Activated B cell treated with CpG ODN at 0.5 μM for 24 hours (primary cell): ENCODE measurements at regions of chr19 and their contacts with region 1.

Region 1: GRCh38 chr19:38402967-38403861 is at the start of gene FAM98C:
- DNase-seq: peak; percentile 99
- ATAC-seq: peak; percentile 97
- H3K4me3 Mint-ChIP-seq: peak within 1 kb of the TSS; percentile 91
- H3K27ac Mint-ChIP-seq: peak within 1 kb of the TSS; percentile 90
- H3K4me1 Mint-ChIP-seq: peaks cover 22% of the 10 kb centered on the region
- H3K27me3 Mint-ChIP-seq: peaks cover 6% of the 10 kb centered on the region
- CTCF ChIP-seq: peak; percentile 98
- total RNA-seq, gene FAM98C: 38.3 and 40.0 TPM in 2 replicates

Region 2: GRCh38 chr19:38022791-38023670 is 380.2 kb before region 1 on chr19:
- CTCF ChIA-PET with region 1: no interaction called
- POLR2A ChIA-PET with region 1: no interaction called
- intact Hi-C with region 1: no loop called
- DNase-seq: no peak
- ATAC-seq: no peak
- H3K4me3 Mint-ChIP-seq: peak overlapping the region; percentile 21
- H3K27ac Mint-ChIP-seq: peak overlapping the region; percentile 79
- H3K4me1 Mint-ChIP-seq: peaks cover 93% of the 10 kb centered on the region
- H3K27me3 Mint-ChIP-seq: no peaks in the 10 kb centered on the region
- CTCF ChIP-seq: no peak

Region 3: GRCh38 chr19:38335949-38336637 is 67.1 kb before region 1 on chr19:
- CTCF ChIA-PET with region 1: no interaction called
- POLR2A ChIA-PET with region 1: interaction called, 13 read pairs
- intact Hi-C with region 1: loop called (anchors 1 kb)
- DNase-seq: peak; percentile 91
- ATAC-seq: peak; percentile 64
- H3K4me3 Mint-ChIP-seq: peak overlapping the region; percentile 91
- H3K27ac Mint-ChIP-seq: peak overlapping the region; percentile 97
- H3K4me1 Mint-ChIP-seq: peaks cover 8% of the 10 kb centered on the region
- H3K27me3 Mint-ChIP-seq: no peaks in the 10 kb centered on the region
- CTCF ChIP-seq: no peak

Region 4: DNA sequence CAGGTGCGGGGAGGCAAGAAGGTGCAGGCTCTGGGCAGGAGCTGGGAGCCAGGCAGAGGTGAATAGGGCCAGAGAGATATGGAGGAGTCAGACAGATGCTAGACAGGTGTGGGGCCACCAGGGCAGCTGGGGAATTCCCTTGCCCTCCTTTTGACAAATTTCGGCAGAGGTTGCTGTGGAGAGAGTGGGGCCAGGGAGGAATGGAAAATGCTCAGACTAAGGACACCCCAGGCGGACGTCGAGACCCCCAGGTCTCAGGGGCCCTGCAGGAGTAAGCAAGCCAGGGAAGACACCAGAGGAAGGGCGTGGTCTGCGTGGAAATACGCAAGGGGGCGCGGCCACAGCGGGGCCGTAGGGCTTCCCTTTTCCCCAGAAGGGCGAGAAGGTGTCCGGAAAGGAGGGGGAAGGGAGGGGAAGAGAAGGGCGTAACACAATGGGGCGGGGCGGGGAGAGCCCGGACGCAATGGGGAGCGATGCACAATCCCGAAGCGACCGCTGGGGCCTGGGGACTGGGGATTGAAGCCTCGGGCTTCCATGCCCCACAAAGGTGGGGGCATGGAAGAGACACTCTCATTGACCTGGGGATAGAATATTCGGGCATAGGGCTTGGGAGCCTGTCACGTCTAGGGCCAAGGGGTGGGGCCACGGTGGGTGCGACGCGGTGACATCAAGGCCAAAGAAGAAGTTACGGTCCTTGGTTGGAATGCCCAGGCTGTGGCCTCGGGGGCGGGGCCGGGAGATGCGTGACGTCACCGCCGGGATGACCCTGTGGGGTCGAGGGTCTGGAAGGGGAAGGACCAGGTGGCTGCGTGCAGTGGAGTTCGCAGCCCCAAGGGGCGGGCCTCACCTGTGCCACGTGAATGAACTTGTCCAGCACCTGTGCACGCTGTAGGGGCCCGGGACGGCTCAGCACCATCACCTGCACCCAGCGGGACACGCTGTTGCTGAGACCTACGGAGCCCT is 14.6 kb after region 1 on chr19:
- CTCF ChIA-PET with region 1: interaction called, 5 read pairs
- POLR2A ChIA-PET with region 1: interaction called, 5 read pairs
- intact Hi-C with region 1: loop called (anchors 1 kb)
- DNase-seq: peak; percentile 57
- ATAC-seq: peak; percentile 88
- H3K4me3 Mint-ChIP-seq: peak overlapping the region; percentile 84
- H3K27ac Mint-ChIP-seq: peak overlapping the region; percentile 78
- H3K4me1 Mint-ChIP-seq: peaks cover 26% of the 10 kb centered on the region
- H3K27me3 Mint-ChIP-seq: no peaks in the 10 kb centered on the region
- CTCF ChIP-seq: no peak

Region 5: DNA sequence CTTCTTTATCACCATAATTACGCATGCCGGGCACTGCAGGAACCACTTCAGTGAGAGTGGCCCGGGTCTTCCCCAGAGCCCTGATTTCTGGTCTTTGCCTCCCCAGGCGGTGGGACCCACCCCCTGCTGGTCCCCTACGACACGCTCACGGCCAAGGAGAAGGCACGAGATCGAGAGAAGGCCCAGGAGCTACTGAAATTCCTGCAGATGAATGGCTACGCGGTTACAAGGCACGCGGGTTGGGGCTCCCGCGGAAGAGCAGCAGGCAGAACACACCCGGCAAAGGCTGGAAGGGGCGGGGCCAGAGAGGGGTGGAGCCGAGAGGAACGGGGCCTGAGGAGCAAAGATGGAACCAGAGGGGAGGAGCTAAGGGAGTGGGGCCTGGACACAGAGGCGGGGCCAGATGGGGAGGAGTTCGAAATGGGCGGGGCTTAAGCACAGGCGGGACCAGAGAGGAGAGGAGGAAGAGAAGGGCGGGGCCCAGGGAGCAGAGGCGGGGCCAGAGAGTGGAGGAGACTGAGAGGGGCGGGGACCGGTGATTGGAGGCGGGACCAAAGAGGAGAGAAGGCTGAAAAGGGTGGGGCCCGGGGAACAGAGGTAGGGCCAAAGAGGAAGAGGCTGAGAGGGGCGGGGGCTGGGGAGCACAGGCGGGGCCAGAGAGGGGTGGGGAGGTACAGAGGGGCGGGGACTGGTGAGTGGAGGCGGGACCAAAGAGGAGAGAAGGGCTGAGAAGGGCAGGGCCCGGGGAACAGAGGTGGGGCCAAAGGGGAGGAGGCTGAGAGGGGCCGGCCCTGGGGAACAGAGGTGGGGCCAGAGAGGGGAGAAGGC is 103.7 kb after region 1 on chr19:
- CTCF ChIA-PET with region 1: interaction called, 4 read pairs
- POLR2A ChIA-PET with region 1: no interaction called
- intact Hi-C with region 1: loop called (anchors 2 kb)
- DNase-seq: peak; percentile 78
- ATAC-seq: peak; percentile 95
- H3K4me3 Mint-ChIP-seq: peak overlapping the region; percentile 28
- H3K27ac Mint-ChIP-seq: no peak overlapping the region
- H3K4me1 Mint-ChIP-seq: peaks cover 6% of the 10 kb centered on the region
- H3K27me3 Mint-ChIP-seq: peaks cover 19% of the 10 kb centered on the region
- CTCF ChIP-seq: no peak

Region 6: DNA sequence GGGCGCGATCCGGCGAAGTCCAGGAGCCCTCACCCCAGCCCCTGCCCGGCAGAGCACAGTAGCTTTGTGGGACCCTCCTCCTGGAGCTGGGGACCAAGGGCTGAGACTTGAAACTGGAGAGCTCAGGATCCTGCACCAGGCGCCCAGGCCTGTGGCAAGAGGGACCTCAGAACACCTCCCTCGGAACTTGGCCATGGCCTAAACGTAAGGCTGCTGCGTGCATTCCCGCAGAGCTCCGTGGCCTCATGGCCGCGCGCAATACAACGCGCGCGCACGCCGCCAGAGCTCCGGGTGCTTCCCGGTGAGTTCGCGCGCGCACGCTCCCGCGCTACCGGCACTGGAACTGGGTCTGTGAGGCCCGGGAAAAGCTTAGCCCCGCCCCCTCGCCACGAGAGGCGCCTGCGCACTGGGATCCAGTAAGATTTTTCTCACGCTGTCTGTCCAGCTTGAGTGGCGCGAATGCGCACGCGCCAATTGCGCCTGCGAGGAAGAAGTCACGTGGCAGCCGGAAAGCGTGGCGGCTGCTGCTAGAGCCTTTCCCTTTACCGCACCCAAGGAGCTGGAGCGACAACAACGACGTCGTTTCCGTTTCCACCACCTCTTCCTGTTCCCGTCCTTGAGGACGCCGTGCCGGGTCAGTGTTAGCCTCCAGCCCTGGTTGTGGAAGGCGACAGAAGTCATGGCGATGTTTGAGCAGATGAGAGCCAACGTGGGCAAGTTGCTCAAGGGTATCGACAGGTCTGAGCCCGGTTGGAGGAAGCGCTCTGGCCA is 215.6 kb after region 1 on chr19 and contains the start of gene EIF3K:
- CTCF ChIA-PET with region 1: interaction called, 16 read pairs
- POLR2A ChIA-PET with region 1: interaction called, 31 read pairs
- intact Hi-C with region 1: loop called (anchors 1 kb)
- DNase-seq: peak; percentile 97
- ATAC-seq: peak; percentile 28
- H3K4me3 Mint-ChIP-seq: peak within 1 kb of the TSS; percentile 100
- H3K27ac Mint-ChIP-seq: peak within 1 kb of the TSS; percentile 97
- H3K4me1 Mint-ChIP-seq: peaks cover 53% of the 10 kb centered on the region
- H3K27me3 Mint-ChIP-seq: no peaks in the 10 kb centered on the region
- CTCF ChIP-seq: no peak
- total RNA-seq, gene EIF3K: 344 and 385 TPM in 2 replicates

Region 7: DNA sequence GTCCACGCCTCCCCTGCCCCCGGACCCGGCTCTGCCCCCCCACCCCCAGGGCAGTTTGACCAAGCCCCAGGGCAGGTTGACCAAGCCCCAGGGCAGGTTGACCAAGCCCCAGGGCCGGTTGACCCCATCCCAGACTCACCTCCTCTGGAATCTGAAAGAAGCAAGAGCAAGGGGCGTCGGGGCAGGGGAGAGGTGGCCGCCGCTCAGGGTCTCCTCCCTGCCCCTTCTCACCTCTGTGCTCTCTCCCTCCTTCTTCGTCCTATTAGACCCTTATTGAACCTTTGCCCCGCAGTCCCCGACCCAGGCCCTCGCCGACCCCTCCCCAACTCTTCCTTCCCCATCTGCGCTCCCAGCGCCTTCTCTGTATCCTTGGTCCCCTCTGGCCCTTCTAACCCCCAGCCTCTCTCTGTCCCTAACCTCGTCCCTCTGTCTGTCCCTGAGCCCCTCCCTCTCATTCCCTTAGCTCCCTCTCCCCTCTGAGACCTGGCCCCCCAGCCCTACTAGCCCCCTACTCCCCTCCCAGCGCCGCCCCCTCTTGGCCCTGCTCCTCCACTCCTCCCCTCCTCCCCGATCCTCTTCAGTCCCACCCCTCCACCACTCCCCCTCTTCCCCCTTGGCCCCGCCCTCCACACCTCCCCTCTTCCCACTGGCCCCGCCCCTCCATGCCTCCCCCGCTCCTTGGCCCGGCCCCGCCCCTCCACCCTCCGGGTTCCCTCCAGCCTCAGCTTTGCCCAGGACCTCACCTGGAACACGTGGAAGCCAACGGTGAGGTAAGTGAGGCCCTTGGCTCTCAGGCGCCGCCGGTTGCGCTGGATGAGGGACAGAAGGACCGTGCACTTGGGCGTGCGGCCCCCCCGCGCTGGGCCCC is 333.4 kb after region 1 on chr19:
- CTCF ChIA-PET with region 1: interaction called, 6 read pairs
- POLR2A ChIA-PET with region 1: interaction called, 3 read pairs
- intact Hi-C with region 1: loop called (anchors 2 kb)
- DNase-seq: peak; percentile 64
- ATAC-seq: peak; percentile 60
- H3K4me3 Mint-ChIP-seq: peak overlapping the region; percentile 71
- H3K27ac Mint-ChIP-seq: peak overlapping the region; percentile 12
- H3K4me1 Mint-ChIP-seq: peaks cover 38% of the 10 kb centered on the region
- H3K27me3 Mint-ChIP-seq: no peaks in the 10 kb centered on the region
- CTCF ChIP-seq: no peak